Lower lobe of right lung (tissue), 2 donors: ENCODE measurements at regions of chr20 and their contacts with region 1.

Region 1: DNA sequence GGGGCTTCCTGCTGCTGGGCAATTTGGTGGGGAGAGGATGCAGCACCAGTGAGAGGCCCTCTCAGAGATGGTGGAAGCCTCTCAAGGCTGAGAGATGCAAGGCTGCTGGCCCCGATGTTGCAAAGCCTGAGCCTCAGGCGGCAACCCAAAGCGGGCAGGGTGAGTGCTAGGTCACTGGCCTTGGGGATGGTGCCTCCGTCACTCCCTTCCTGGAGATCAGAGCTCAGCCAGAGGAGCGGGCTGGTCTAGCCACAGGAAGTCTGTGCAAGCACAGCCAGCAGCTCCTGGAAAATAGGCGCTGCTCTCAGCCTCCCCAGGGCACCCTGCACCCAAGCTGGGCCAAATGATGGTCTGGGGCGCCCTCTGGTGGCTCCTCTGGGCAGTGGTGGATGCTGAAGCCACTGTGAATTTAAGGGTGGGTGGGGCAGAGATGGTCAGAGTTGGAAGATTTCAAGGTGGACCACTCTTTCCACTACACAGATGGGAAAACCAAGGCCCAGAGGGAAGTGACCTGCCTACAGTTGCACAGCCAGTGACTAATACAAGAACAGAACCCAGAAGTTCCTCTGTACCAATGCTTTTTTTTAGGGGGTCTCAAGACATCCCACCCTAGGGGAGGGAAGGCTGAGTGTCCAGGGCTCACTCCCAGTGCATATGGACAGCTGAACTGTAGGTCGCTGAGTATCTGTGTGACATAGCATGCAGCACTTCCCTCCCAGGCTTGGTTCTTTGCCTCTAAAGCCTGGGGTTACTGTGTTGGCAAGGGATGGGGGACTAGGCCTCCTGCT is 20.8 kb downstream of the C20orf203 start:
- DNase-seq: peak; percentile 86
- ATAC-seq: peak; percentile 91 to 96
- H3K4me3 ChIP-seq: no peak overlapping the region
- H3K27ac ChIP-seq: no peak overlapping the region
- H3K4me1 ChIP-seq: no peaks in the 10 kb centered on the region
- H3K27me3 ChIP-seq: no peaks in the 10 kb centered on the region
- CTCF ChIP-seq: peak; percentile 95

Region 2: DNA sequence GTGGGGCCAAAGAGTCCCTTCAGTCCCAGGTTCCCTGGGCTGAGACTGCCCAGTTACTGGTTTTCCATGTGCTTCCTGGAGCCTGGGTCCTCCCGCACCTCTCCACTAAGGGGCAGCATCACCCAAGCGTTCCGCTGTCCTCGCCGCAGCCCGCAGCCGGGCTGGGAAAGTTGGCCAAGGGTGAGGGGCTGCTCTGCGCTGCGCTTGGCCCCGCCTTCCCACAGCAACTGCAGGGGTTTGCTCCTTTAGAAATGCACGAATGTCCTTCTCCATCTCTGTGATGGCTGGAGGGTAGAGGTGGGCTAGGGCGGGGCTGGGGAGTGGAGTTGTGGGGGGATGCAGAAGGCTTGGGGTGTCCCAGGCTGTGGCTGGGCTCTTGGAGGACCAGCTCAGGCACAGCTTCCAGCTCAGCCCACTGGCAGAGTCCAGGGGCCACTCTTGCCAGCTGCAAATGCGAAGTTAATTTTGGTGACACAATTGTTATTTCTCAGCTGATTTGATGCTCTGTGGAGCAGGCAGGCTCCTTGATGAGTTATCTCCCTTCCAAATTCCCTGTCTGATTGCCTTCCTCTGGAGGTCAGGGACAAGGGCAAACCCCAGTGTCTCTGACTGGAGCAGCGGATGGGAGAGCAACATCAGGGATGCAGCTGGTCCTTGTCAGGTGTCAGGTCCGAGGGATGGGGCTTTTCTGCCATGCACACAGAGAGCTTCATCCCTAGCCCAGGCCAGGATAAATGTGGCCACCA is 131.0 kb before region 1 on chr20:
- intact Hi-C with region 1: loop called (anchors 10 kb)
- DNase-seq: peak; percentile 67
- ATAC-seq: peak; percentile 83 to 87
- H3K4me3 ChIP-seq: no peak overlapping the region
- H3K27ac ChIP-seq: no peak overlapping the region
- H3K4me1 ChIP-seq: peaks cover 19% of the 10 kb centered on the region
- H3K27me3 ChIP-seq: no peaks in the 10 kb centered on the region
- CTCF ChIP-seq: peak; percentile 86

Region 3: GRCh38 chr20:32535953-32536823 is 116.7 kb before region 1 on chr20:
- intact Hi-C with region 1: no loop called
- DNase-seq: peak; percentile 61
- ATAC-seq: peak; percentile 82 to 83
- H3K4me3 ChIP-seq: peak overlapping the region; percentile 56
- H3K27ac ChIP-seq: peak overlapping the region; percentile 64
- H3K4me1 ChIP-seq: peaks cover 37% of the 10 kb centered on the region
- H3K27me3 ChIP-seq: no peaks in the 10 kb centered on the region
- CTCF ChIP-seq: no peak

Region 4: DNA sequence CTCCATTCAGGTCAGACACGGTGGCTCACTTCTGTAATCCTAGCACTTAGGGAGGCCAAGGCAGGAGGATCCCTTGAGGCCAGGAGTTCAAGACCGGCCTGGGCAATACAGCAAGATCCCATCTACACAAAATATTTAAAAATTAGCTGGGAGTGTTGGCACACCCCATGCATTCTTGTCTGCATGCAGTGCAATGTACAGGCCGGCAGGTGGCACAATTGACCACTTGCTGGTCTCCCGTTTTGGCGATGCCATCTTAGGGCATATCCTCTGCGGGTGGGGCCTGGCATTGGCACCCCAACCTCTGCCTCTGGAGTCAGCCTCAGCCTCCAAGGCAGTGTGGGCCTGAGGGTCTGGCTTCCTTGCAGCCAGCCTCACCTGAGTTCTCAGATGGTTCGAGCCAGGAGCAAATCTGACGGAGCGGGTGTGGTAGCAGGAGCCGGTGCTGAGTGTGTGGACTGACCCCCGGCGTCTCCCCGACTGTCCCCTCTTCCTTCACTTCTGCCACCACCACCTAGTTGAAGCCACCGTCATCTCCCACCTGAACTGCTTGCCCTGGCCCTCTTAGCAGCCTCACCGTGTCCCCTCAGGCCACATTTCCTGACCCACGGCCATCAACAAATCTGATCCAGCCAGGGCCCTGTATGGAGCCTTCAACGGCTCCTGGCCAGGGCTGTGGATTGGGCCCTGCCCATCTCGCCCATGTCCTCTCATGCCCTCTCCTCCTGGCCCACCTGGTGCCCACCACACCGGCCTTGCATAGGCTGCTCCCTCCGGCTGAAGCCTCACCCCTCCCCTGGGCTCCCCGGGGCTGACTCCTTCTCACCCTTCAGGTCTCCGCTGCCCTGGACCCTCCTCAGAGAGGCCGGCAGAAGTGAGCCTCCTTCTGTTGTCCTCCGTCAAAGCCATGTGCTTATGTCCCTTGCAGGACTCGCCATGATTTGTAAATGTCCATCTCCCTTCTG is 249.8 kb after region 1 on chr20:
- intact Hi-C with region 1: no loop called
- DNase-seq: peak; percentile 68
- ATAC-seq: peak; percentile 81 to 83
- H3K4me3 ChIP-seq: no peak overlapping the region
- H3K27ac ChIP-seq: no peak overlapping the region
- H3K4me1 ChIP-seq: no peaks in the 10 kb centered on the region
- H3K27me3 ChIP-seq: no peaks in the 10 kb centered on the region
- CTCF ChIP-seq: peak; percentile 93